Heart right ventricle (tissue), 16 donors: ENCODE measurements at regions of chr1 and their contacts with region 1.

Region 1: DNA sequence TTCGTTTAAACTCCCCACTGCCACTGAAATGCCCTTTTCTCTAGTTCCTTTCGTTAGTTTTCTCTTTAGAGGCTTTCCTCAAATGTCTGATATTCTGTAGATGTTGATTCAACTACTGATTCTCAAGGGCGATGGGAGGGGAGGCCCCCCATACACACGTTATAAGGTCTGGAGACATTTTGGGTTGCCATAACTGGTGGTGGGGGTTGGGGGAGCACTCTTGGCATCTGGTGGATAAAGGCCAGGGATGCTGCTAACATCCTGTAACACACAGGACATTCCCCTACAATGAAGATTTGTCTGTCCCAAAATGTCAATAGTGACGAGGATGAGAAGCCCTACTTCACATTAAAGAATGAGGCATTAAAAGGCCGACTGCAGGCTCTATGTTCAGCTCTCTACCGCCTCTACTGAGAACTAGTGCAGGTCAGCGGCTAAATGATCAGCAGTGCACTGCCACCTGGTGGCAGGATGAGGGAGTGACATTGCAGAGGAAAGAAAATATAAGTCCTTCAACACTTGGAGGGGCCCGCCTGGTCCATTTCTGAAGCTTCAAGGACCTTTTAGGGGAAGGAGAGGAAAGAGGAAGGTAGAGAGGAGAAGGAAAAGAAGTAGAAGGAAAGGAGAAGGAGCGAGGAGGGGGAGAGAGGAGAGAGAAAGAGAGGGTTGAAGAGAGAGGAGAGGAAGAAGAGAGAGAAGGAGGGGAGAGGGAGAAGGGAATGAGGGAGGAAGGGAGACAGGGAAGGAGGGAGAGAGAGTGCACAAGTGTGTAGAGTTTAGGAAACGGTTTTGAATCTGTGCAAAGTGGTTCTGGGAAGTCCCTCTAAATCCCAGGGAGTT is 29.4 kb downstream of the ALG14 start:
- DNase-seq: peak; percentile 74 to 85
- ATAC-seq: peak; percentile 80 to 91 (median 86)
- H3K4me3 ChIP-seq: no peak overlapping the region
- H3K27ac ChIP-seq: peak overlapping the region in 9 of 10 donors; percentile 20 to 71 (median 63)
- H3K4me1 ChIP-seq: peaks cover 0 to 25% (median 17%) of the 10 kb centered on the region in 9 donors
- H3K27me3 ChIP-seq: no peaks in the 10 kb centered on the region
- CTCF ChIP-seq: peak; percentile 93 to 100 (median 98)

Region 2: GRCh38 chr1:94481473-94481933 is 561.9 kb before region 1 on chr1:
- intact Hi-C with region 1: loop called in 1 of 10 experiments (anchors 10 kb)
- DNase-seq: peak in 1 of 2 donors; percentile 42
- ATAC-seq: peak; percentile 65 to 94 (median 89)
- H3K4me3 ChIP-seq: no peak overlapping the region
- H3K27ac ChIP-seq: no peak overlapping the region
- H3K4me1 ChIP-seq: peaks cover 0 to 7% (median 0%) of the 10 kb centered on the region in 9 donors
- H3K27me3 ChIP-seq: no peaks in the 10 kb centered on the region
- CTCF ChIP-seq: peak; percentile 67 to 88 (median 82)

Region 3: DNA sequence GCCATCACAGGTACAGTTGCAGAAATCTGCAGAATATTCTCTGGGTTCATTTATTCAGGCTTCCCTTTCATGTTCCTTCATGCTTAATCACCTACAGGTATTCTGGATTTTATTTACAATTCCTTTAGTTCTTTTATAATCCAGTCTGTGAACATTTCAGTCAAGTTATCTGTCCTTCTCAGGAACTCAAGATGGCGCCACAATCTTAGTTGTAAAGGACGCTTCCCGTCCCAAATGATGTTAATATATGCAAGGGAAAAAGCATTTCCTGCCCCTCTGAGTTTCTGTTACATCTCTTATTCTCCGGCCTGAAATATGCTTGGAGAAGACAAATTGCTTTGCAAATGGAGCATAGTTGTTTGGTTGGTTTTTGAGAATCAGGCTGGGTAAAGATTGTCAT is 521.1 kb before region 1 on chr1:
- intact Hi-C with region 1: loop called in 4 of 10 experiments (anchors 5 to 10 kb)
- DNase-seq: peak in 1 of 2 donors; percentile 35
- ATAC-seq: peak in 6 of 8 donors; percentile 43 to 72 (median 62)
- H3K4me3 ChIP-seq: no peak overlapping the region
- H3K27ac ChIP-seq: no peak overlapping the region
- H3K4me1 ChIP-seq: peaks cover 0 to under 1% (median 0%) of the 10 kb centered on the region in 9 donors
- H3K27me3 ChIP-seq: no peaks in the 10 kb centered on the region
- CTCF ChIP-seq: peak in 7 of 9 donors; percentile 40 to 73 (median 62)

Region 4: DNA sequence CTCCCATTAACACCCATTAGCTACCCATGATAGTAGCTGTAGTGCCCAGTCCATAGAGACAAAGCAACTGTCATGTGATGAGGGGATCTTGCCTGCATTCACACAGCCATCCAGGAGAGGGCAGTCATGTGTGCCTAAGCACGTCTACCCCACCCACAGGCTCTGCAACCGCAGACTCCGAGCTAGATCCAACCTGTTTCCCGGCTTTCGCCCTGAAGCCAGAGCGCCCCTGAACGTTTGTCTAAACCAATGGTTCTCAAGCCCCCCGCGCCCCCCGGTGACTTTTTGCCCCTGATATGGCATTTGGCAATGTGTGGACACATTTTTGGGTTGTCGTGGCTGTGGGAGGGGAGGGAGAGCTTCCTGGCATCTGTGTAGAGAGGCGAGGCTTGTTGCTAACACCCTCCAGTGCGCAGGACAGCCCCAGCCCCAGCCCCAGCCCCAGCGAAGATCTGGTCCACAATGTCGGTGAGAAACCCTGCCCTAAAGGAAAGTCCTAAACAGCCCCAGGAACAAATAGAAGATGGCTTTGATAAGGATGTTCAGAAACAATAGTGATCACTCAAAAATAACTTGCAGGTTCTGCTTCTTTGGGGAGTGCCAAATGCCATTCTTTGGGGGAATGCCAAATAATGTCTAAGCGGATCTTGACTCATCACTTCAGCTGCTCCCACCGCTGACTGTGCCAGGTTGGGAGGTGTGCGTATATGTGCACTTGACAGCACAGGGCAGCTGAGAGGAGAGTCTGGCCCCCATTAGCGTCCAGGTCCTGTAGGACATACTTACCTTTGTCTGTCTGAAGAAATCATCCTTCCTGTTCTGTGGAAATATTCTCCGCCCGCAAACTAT is 188.7 kb before region 1 on chr1:
- intact Hi-C with region 1: loop called (anchors 1 to 5 kb)
- DNase-seq: peak; percentile 80 to 91
- ATAC-seq: peak; percentile 93 to 97 (median 95)
- H3K4me3 ChIP-seq: peak overlapping the region in 9 of 10 donors; percentile 18 to 56 (median 50)
- H3K27ac ChIP-seq: peak overlapping the region; percentile 14 to 81 (median 74)
- H3K4me1 ChIP-seq: peaks cover 0 to 45% (median 15%) of the 10 kb centered on the region in 9 donors
- H3K27me3 ChIP-seq: no peaks in the 10 kb centered on the region
- CTCF ChIP-seq: peak; percentile 81 to 98 (median 93)